Activated T-helper 1 cell treated with anti-CD3 and anti-CD28 coated beads, Interleukin-12 subunit alpha, Interleukin-12 subunit beta, Interleukin-2, Interleukin-4 antibody, amounts not matched to agents 30 ng/mL and 10 ng/mL and 1 ng/mL, durations not matched to agents 14 hours and 24 hours and 36 hours (primary cell): ENCODE measurements at regions of chr6 and their contacts with region 1.

Region 1: DNA sequence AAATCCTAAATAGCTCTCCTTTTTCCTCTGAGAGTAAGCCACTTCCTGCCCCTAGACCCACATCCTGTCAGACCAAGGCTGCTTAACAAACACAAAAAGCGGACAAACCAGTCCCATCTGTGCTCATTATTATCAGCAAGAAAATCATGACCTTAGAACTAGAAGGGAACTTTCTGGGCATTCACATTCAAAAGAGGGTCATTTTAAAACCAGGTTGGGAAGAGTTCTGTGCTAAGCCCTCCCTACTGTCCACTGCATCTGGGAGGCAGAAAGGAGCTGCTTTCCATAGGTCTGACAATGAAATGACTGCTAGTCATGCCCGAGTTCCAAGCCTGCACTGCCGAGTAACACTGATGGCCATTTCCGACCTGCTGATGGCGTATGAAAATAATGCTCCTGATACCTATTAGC is 15.4 kb downstream of the EZR start:
- DNase-seq: peak; percentile 38
- H3K4me3 Mint-ChIP-seq: peak overlapping the region; percentile 72
- H3K27ac Mint-ChIP-seq: peak overlapping the region; percentile 89
- H3K4me1 Mint-ChIP-seq: peaks cover 88% of the 10 kb centered on the region
- H3K27me3 Mint-ChIP-seq: no peaks in the 10 kb centered on the region

Region 2: GRCh38 chr6:158835616-158836221 is 32.0 kb after region 1 on chr6:
- intact Hi-C with region 1: no loop called
- DNase-seq: no peak
- H3K4me3 Mint-ChIP-seq: no peak overlapping the region
- H3K27ac Mint-ChIP-seq: no peak overlapping the region
- H3K4me1 Mint-ChIP-seq: no peaks in the 10 kb centered on the region
- H3K27me3 Mint-ChIP-seq: peaks cover 6% of the 10 kb centered on the region

Region 3: GRCh38 chr6:158869826-158870648 is 66.3 kb after region 1 on chr6:
- intact Hi-C with region 1: loop called (anchors 5 kb)
- DNase-seq: peak; percentile 94
- H3K4me3 Mint-ChIP-seq: peak overlapping the region; percentile 87
- H3K27ac Mint-ChIP-seq: peak overlapping the region; percentile 99
- H3K4me1 Mint-ChIP-seq: peaks cover 37% of the 10 kb centered on the region
- H3K27me3 Mint-ChIP-seq: peaks cover 5% of the 10 kb centered on the region